BJ (cell line): ENCODE measurements at regions of chr14 and their contacts with region 1.

Region 1: DNA sequence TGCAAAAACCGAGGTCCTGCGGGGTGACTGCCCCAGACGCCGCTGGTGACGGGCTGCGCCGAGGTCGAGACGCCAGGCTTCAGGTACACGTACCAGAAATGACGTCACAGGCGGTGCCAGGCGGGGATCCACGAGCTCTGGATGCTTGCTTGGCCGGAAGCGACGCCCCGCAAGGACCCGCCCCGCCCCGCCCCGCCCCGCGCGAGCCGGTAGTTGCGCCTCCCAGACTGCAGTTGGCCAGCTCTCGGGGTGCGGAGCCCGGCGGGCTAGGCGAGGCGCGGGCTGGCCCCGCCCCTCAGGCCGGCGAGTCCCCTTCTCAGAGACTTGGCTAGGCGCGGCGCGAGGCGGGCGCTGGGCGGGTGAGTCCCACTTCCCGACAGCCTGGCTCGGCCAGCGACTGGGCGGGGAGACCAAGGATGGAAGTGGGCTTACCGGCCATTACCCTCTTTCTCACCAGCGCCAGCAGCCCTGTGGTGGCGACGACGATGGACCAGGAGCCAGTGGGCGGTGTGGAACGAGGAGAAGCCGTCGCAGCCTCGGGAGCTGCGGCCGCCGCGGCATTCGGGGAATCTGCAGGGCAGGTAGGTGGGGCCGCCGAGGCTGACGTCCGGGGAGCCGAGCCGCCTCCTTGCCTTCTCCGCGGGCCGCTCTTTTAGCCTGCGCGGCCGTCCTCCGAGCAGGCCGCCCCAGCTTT is at the start of gene FAM177A1:
- DNase-seq: peak; percentile 84
- H3K4me3 ChIP-seq: peak within 1 kb of the TSS; percentile 73
- H3K27me3 ChIP-seq: no peaks in the 10 kb centered on the region
- CTCF ChIP-seq: no peak
- polyA plus RNA-seq, gene FAM177A1: 29.5 and 48.4 TPM in 2 replicates

Region 2: GRCh38 chr14:34640826-34641225 is 405.4 kb before region 1 on chr14:
- CTCF ChIA-PET with region 1: no interaction called
- POLR2A ChIA-PET with region 1: no interaction called
- DNase-seq: no peak
- H3K4me3 ChIP-seq: no peak overlapping the region
- H3K27me3 ChIP-seq: no peaks in the 10 kb centered on the region
- CTCF ChIP-seq: no peak

Region 3: GRCh38 chr14:35073486-35073885 is 27.3 kb after region 1 on chr14:
- CTCF ChIA-PET with region 1: no interaction called
- POLR2A ChIA-PET with region 1: interaction called, 21 read pairs
- DNase-seq: no peak
- H3K4me3 ChIP-seq: no peak overlapping the region
- H3K27me3 ChIP-seq: no peaks in the 10 kb centered on the region
- CTCF ChIP-seq: no peak

Region 4: DNA sequence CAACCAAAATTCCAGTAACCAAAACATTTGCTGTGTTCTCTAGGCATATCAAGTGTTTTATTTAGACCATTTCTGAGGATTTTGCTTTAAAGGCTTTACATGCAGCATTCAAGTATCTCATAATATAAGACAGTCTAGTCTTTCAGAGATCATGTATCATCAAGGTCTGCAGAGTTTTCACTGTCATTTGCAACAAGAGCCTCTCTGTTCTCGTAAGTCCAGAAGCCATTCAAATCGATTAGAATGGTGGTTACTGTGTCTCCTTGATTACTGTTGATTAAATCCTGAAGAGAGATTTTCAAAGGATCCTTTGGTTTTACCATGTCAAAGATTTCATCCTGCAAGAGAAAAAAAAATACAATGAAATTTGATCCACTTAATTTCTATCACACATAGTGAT is 39.2 kb after region 1 on chr14:
- CTCF ChIA-PET with region 1: no interaction called
- POLR2A ChIA-PET with region 1: no interaction called
- DNase-seq: no peak
- H3K4me3 ChIP-seq: no peak overlapping the region
- H3K27me3 ChIP-seq: no peaks in the 10 kb centered on the region
- CTCF ChIP-seq: no peak

Region 5: GRCh38 chr14:35124127-35124526 is 77.9 kb after region 1 on chr14:
- CTCF ChIA-PET with region 1: no interaction called
- POLR2A ChIA-PET with region 1: no interaction called
- DNase-seq: no peak
- H3K4me3 ChIP-seq: no peak overlapping the region
- H3K27me3 ChIP-seq: no peaks in the 10 kb centered on the region
- CTCF ChIP-seq: no peak

Region 6: DNA sequence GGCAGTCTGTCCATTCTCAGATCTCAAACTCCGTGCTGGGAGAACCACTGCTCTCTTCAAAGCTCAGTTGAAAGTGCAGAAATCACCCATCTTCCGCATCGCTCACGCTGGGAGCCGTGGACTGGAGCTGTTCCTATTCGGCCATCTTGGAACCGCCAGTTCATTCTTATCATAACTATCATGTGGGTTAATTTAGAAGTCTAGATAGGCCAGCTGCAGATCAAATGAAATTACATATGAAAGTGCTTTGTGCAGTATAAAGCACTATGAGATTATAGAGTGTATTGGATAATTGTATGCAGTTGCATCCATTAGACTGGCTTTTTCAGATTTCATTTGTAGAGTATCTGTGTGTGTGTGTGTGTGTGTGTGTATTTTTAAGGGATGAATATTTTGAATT is 134.0 kb after region 1 on chr14:
- CTCF ChIA-PET with region 1: no interaction called
- POLR2A ChIA-PET with region 1: no interaction called
- DNase-seq: no peak
- H3K4me3 ChIP-seq: no peak overlapping the region
- H3K27me3 ChIP-seq: no peaks in the 10 kb centered on the region
- CTCF ChIP-seq: no peak